ENCODE measurements at regions of chr19 and their contacts with region 1.

Region 1: DNA sequence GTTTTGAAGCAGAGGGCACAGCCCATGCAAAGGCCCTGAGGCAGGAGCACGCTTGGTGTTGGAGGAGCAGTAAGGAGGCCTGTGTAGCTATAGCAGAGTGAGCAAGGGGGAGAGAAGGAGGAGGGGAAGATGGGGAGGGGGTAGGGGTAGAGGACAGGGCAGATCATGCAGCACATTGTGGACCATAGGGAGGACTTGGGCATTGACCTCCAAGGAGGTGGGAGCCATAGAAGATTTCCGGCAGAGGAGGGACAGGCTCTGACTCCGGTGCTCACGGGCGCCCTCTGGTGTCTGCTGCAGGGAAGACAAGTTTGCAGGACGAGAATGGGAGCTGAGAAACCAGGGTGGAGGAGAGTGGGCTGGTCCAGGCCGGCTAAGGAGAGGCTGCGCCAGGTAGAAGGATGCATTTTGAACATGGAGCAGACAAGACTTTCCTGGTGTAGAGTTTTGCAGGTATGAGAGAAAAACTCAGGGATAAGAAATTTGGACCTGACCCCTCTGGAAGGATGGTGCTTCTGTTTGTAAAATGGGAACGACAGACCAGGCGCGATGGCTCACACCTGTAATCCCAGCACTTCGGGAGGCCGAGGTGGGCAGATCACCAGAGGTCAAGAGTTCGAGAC is 13.7 kb upstream of the CREB3L3 start:
- DNase-seq: peak; percentile 91
- H3K4me3 Mint-ChIP-seq: no peak overlapping the region
- H3K27ac Mint-ChIP-seq: no peak overlapping the region
- H3K4me1 Mint-ChIP-seq: peaks cover 15% of the 10 kb centered on the region
- H3K27me3 Mint-ChIP-seq: peaks cover 5% of the 10 kb centered on the region

Region 2: DNA sequence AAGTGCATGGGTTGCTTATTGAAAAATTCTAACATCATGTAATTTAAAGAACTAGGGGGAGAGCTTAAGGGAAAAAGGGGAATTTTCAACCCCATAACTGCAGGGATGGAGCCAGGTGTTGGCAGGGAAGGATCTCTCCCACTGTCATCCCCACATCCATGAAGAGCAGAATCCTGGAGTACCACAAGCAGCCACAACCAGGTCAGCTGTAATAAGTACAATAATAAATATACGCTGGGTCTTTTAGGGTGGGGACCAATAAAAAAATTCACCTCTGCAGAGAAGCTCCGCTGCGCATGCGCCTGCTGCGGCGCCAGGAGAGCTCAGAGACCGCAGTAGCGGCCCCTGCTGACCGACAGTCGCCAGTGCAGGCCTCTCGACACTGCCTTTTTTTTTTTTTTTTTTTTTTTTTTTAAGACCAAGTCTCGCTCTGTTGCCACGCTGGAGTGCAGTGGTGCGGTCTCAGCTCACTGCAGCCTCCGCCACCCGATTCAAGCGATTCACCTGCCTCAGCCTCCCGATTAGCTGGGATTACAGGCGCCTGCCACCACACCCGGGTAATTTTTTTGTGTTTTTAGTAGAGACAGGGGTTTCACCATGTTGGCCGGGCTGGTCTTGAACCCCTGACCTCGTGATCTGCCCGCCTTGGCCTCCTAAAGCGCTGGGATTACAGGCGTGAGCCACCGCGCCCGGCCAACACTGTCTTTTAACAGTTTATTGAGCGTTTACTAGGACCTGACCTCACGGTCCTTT is 151.9 kb before region 1 on chr19:
- CTCF ChIA-PET with region 1: interaction called, 19 read pairs
- POLR2A ChIA-PET with region 1: no interaction called
- DNase-seq: peak; percentile 91
- H3K4me3 Mint-ChIP-seq: peak overlapping the region; percentile 94
- H3K27ac Mint-ChIP-seq: peak overlapping the region; percentile 95
- H3K4me1 Mint-ChIP-seq: peaks cover 46% of the 10 kb centered on the region
- H3K27me3 Mint-ChIP-seq: no peaks in the 10 kb centered on the region

Region 3: GRCh38 chr19:4115050-4115817 is 24.5 kb before region 1 on chr19:
- CTCF ChIA-PET with region 1: interaction called, 11 read pairs
- POLR2A ChIA-PET with region 1: no interaction called
- DNase-seq: peak; percentile 86
- H3K4me3 Mint-ChIP-seq: peak overlapping the region; percentile 56
- H3K27ac Mint-ChIP-seq: peak overlapping the region; percentile 82
- H3K4me1 Mint-ChIP-seq: peaks cover 51% of the 10 kb centered on the region
- H3K27me3 Mint-ChIP-seq: no peaks in the 10 kb centered on the region

Region 4: GRCh38 chr19:4154571-4155312 is 15.0 kb after region 1 on chr19:
- CTCF ChIA-PET with region 1: interaction called, 15 read pairs
- POLR2A ChIA-PET with region 1: no interaction called
- DNase-seq: no peak
- H3K4me3 Mint-ChIP-seq: no peak overlapping the region
- H3K27ac Mint-ChIP-seq: no peak overlapping the region
- H3K4me1 Mint-ChIP-seq: peaks cover 8% of the 10 kb centered on the region
- H3K27me3 Mint-ChIP-seq: peaks cover 1% of the 10 kb centered on the region

Measured in activated CD4-positive, alpha-beta T cell treated with anti-CD3 and anti-CD28 coated beads, Interleukin-2, amount 10 ng/mL, durations not matched to agents 7 days and 5 days (primary cell).